ENCODE measurements at regions of chr9 and their contacts with region 1.

Region 1: GRCh38 chr9:118809160-118809625 is 560.0 kb downstream of the BRINP1 start:
- DNase-seq: no peak
- ATAC-seq: no peak

Region 2: DNA sequence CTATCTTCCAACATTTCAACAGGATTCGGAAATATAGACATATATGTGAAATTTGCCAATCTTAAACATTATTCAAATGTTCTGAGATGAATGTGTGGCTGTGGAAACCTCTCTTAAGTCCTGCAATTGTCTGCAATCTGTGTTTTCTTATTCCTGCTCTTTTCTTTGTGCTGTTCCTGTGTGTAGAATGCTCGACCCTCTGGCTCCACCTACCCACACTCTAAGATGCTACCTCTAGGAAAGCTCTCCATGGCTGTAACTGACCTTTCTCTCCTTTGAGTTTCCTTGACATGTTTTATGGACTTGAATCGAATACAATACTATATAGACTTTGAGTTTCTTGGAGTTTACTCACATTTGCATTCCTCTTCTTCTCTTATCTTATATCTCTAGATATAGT is 1273.8 kb before region 1 on chr9:
- intact Hi-C with region 1: no loop called
- DNase-seq: no peak
- ATAC-seq: peak; percentile 52

Region 3: DNA sequence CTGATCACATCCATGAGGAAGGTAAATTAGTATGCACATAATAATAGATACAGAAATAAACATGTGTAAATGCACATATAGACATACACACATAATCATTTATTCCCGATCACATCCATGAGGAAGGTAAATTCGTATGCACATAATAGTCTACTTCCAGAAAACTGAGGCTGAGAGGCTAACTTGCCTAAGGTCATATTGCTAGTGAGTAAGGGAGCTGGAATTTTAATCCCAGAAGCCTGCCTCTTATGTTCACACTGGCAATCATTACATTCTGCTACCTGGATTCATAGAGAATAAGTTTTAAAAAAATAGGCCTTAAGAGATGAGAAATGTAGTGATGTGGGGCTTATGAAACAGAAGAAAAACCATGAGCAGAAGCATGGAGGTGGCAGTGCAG is 156.3 kb before region 1 on chr9:
- intact Hi-C with region 1: no loop called
- DNase-seq: no peak
- ATAC-seq: no peak

Region 4: DNA sequence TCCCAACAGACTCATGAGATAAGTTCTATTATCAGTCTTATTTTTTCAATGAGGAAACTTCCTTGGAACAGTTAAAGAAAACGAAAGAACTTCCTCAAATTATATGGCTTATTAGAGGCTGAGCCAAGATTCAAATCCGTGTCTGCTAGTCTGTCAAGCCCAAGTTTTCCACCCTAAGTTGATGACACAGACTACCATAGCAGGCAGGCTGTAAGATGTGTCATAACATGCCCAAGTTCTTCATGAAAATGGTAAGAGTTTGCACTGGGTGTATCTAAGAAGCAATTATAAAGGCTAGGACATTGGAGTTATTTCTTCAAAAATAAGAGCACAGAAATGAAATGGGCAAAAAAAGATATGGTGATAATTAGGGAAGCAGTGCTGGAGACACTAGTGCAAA is 74.5 kb before region 1 on chr9:
- intact Hi-C with region 1: loop called (anchors 5 kb)
- DNase-seq: no peak
- ATAC-seq: no peak